ENCODE measurements at regions of chr16 and their contacts with region 1.

Region 1: DNA sequence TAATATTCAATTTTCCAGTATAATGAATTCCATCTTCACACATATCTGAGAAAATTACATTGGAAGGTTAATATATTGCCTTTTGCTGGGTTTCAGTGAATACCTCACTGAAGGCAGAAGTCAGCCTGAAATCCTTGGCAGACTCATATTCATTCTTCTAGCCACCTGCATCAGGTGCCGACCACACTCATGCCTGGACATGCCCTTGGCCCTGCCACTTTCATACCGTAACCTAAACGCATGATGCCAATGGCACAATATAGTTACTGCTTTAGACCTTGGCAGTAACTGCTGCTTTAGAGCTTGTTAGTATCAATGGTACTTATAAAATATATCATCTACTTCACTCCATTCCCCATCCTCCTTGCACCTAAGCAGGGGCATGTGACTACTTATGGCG is 817.6 kb upstream of the CDH8 start:
- DNase-seq: no peak
- H3K4me3 ChIP-seq: no peak overlapping the region
- CTCF ChIP-seq: no peak

Region 2: GRCh38 chr16:62755938-62756337 is 97.9 kb before region 1 on chr16:
- in situ Hi-C with region 1: no loop called
- DNase-seq: no peak
- H3K4me3 ChIP-seq: no peak overlapping the region
- CTCF ChIP-seq: no peak

Region 3: GRCh38 chr16:62805221-62805857 is 48.5 kb before region 1 on chr16:
- in situ Hi-C with region 1: loop called (anchors 5 kb)
- DNase-seq: no peak
- H3K4me3 ChIP-seq: no peak overlapping the region
- CTCF ChIP-seq: no peak

Measured in astrocyte of the cerebellum (primary cell).